ENCODE measurements at regions of chr14 and their contacts with region 1.

Region 1: GRCh38 chr14:36941783-36942521 is 230.5 kb downstream of the SLC25A21 start:
- DNase-seq: peak in 6 of 9 donors; percentile 1 to 52 (median 14)
- ATAC-seq: no peak
- H3K4me3 ChIP-seq: no peak overlapping the region
- H3K4me3 Mint-ChIP-seq: no peak overlapping the region
- H3K27ac ChIP-seq: no peak overlapping the region
- H3K27ac Mint-ChIP-seq: no peak overlapping the region
- H3K4me1 ChIP-seq: no peaks in the 10 kb centered on the region
- H3K4me1 Mint-ChIP-seq: no peaks in the 10 kb centered on the region
- H3K27me3 ChIP-seq: no peaks in the 10 kb centered on the region
- H3K27me3 Mint-ChIP-seq: peaks cover 0 to 5% (median 5%) of the 10 kb centered on the region in 5 donors

Region 2: GRCh38 chr14:36451301-36452065 is 490.5 kb before region 1 on chr14:
- CTCF ChIA-PET with region 1: no interaction called
- POLR2A ChIA-PET with region 1: no interaction called
- intact Hi-C with region 1: loop called in 1 of 2 experiments (anchors 10 kb)
- DNase-seq: no peak
- ATAC-seq: no peak
- H3K4me3 ChIP-seq: no peak overlapping the region
- H3K4me3 Mint-ChIP-seq: no peak overlapping the region
- H3K27ac ChIP-seq: no peak overlapping the region
- H3K27ac Mint-ChIP-seq: no peak overlapping the region
- H3K4me1 ChIP-seq: no peaks in the 10 kb centered on the region
- H3K4me1 Mint-ChIP-seq: no peaks in the 10 kb centered on the region
- H3K27me3 ChIP-seq: no peaks in the 10 kb centered on the region
- H3K27me3 Mint-ChIP-seq: peaks cover 4 to 25% (median 7%) of the 10 kb centered on the region in 5 donors

Region 3: DNA sequence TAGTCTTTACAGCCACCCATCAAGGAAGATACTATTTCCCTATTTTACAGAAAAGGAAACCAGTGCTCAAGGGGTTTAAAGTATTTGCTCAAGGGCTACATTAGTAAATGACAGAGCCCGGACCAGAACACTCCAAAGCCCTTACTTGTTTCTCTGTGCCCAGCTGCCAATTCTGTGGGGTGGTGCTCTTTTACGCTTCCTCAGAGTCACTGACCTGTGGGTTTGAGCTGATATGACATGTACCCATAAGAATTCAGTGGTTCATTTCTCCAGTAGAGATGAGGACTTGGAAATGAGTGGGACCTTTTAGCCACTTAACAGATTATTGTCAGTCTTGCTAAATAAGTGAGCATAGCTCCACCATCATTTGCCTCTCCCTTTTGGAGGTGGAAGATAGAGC is 322.1 kb before region 1 on chr14:
- CTCF ChIA-PET with region 1: no interaction called
- POLR2A ChIA-PET with region 1: no interaction called
- intact Hi-C with region 1: no loop called
- DNase-seq: no peak
- ATAC-seq: no peak
- H3K4me3 ChIP-seq: no peak overlapping the region
- H3K4me3 Mint-ChIP-seq: no peak overlapping the region
- H3K27ac ChIP-seq: no peak overlapping the region
- H3K27ac Mint-ChIP-seq: no peak overlapping the region
- H3K4me1 ChIP-seq: no peaks in the 10 kb centered on the region
- H3K4me1 Mint-ChIP-seq: no peaks in the 10 kb centered on the region
- H3K27me3 ChIP-seq: no peaks in the 10 kb centered on the region
- H3K27me3 Mint-ChIP-seq: peaks cover 0 to 11% (median 5%) of the 10 kb centered on the region in 5 donors

Region 4: DNA sequence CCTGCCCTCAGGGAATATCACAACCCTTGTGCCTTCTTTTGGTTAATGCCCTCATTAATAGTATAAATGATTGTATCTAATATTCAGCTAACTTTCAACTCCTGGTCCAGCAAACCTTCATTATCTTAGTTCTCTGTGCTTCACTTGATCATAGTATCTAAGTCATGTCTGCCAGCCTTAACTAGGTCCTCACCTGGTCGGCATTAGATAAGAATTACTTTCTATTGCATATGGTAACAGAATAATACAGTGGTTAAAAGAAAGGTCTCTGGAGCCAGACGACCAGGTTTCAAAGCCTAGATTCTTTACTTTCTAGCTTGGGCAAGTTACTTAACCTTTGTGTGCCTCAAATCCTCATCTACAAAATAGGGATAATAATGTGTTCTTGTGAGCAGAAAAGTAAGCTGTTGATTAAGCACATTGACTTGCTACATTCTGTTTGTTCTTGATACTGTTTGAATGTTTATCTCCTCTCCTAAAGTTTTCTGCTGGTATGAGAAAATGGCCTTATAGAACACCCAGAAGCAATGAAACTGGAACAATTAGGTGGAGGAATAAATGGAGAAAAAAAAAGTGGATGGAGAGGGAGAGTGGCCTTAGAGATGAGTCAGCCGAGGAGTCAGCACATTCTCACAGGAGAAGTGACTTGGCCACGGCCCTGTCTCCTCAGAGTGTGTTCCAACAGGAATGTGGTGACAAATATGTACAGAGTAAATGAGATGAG is 54.3 kb after region 1 on chr14:
- CTCF ChIA-PET with region 1: no interaction called
- POLR2A ChIA-PET with region 1: no interaction called
- intact Hi-C with region 1: no loop called
- DNase-seq: no peak
- ATAC-seq: no peak
- H3K4me3 ChIP-seq: no peak overlapping the region
- H3K4me3 Mint-ChIP-seq: no peak overlapping the region
- H3K27ac ChIP-seq: no peak overlapping the region
- H3K27ac Mint-ChIP-seq: no peak overlapping the region
- H3K4me1 ChIP-seq: no peaks in the 10 kb centered on the region
- H3K4me1 Mint-ChIP-seq: no peaks in the 10 kb centered on the region
- H3K27me3 ChIP-seq: no peaks in the 10 kb centered on the region
- H3K27me3 Mint-ChIP-seq: no peaks in the 10 kb centered on the region

Measured in naive thymus-derived CD4-positive, alpha-beta T cell (primary cell).